IMR-90 (cell line): ENCODE measurements at regions of chr3 and their contacts with region 1.

Region 1: DNA sequence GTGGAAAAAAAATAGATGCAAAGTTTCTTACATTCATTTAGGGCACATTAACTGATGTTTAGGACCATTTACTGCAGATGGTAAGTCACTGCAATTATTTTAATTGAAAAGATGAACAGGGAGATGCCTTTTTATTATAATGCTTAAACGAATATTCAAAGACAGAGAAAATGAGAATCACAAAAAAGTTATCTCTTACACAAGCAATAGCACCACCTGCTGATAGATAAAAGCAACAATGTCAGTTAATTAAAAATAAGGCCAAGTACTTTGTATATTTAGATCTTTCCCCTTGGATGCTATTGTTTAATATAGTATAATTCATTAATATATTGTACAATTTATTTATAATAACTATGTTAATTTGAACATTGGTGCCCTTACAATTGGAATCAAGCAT is 55.9 kb downstream of the IFT80 start:
- DNase-seq: peak; percentile 49
- ATAC-seq: peak; percentile 40
- H3K4me3 ChIP-seq: no peak overlapping the region
- H3K27ac ChIP-seq: no peak overlapping the region
- H3K4me1 ChIP-seq: peaks cover 2% of the 10 kb centered on the region; the same call in 1 of the 2 replicates
- H3K27me3 ChIP-seq: no peaks in the 10 kb centered on the region
- CTCF ChIP-seq: peak; percentile 71
- POLR2A ChIP-seq: no peak
- RAD21 ChIP-seq: peak; percentile 74

Region 2: DNA sequence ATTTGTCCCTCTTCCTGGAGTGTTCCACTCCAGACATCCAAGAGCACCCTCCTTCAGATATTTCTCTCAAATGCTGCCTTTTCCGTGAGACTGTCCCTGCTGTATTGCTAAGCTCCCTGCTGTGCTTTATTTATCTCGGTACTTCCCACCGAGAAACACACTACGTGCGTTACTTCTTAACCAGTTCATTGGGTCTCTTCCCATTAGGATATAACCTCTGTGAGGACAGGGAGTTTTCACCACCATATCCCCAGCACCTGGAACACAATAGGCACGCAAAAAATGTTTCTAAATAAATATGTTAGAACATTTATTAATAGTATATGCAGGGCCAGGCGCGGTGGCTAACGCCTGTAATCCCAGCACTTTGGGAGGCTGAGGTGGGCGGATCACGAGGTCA is 663.2 kb before region 1 on chr3:
- CTCF ChIA-PET with region 1: no interaction called
- POLR2A ChIA-PET with region 1: no interaction called
- dilution Hi-C with region 1: no loop called
- in situ Hi-C with region 1: no loop called
- intact Hi-C with region 1: no loop called
- DNase-seq: no peak
- ATAC-seq: no peak
- H3K4me3 ChIP-seq: no peak overlapping the region
- H3K27ac ChIP-seq: no peak overlapping the region
- H3K4me1 ChIP-seq: no peaks in the 10 kb centered on the region
- H3K27me3 ChIP-seq: no peaks in the 10 kb centered on the region; the same call in 1 of the 2 replicates
- CTCF ChIP-seq: no peak
- POLR2A ChIP-seq: no peak
- RAD21 ChIP-seq: no peak

Region 3: DNA sequence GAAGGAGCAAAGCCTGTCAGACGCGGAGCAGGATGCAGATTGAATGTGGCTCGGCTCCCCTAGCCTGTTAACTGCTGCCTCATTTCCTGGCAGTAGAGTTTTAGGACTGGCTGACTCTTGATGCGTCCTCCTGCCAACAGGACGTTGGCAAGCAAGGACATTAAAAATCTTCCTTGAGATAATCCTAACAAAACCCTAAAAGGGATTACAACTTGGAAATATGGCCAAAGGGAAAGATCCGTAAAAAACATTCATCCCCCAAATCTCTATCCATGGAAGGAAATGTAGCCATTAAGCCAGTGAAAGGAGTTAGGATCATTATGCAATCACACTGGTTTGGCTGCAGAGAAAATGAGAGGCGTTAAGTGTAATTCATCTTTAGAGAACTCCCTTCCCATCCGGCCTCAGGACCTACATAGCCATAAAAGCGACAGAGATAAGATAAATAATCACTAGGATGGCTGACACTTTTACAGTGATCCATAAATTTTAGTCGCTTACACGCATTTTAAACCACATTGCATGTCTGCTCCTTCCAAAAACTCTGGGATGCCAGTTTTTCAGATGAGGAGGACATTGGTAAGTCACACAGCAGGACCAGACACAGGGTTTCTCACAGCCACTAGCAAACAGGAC is 162.4 kb before region 1 on chr3:
- CTCF ChIA-PET with region 1: no interaction called
- POLR2A ChIA-PET with region 1: no interaction called
- dilution Hi-C with region 1: no loop called
- in situ Hi-C with region 1: no loop called
- intact Hi-C with region 1: loop called (anchors 5 kb)
- DNase-seq: no peak
- ATAC-seq: peak; percentile 61
- H3K4me3 ChIP-seq: no peak overlapping the region
- H3K27ac ChIP-seq: no peak overlapping the region
- H3K4me1 ChIP-seq: peaks cover 2% of the 10 kb centered on the region; the same call in 1 of the 2 replicates
- H3K27me3 ChIP-seq: no peaks in the 10 kb centered on the region
- CTCF ChIP-seq: no peak
- POLR2A ChIP-seq: no peak
- RAD21 ChIP-seq: no peak

Region 4: GRCh38 chr3:160697628-160698382 is 354.7 kb after region 1 on chr3:
- CTCF ChIA-PET with region 1: no interaction called
- POLR2A ChIA-PET with region 1: no interaction called
- dilution Hi-C with region 1: no loop called
- in situ Hi-C with region 1: no loop called
- intact Hi-C with region 1: no loop called
- DNase-seq: peak; percentile 63
- ATAC-seq: peak; percentile 68; the same call in 1 of the 2 replicates
- H3K4me3 ChIP-seq: no peak overlapping the region
- H3K27ac ChIP-seq: no peak overlapping the region; the same call in 1 of the 2 replicates
- H3K4me1 ChIP-seq: peaks cover 10% of the 10 kb centered on the region
- H3K27me3 ChIP-seq: no peaks in the 10 kb centered on the region
- CTCF ChIP-seq: no peak
- POLR2A ChIP-seq: no peak
- RAD21 ChIP-seq: no peak